ENCODE measurements at regions of chr10 and their contacts with region 1.

Region 1: DNA sequence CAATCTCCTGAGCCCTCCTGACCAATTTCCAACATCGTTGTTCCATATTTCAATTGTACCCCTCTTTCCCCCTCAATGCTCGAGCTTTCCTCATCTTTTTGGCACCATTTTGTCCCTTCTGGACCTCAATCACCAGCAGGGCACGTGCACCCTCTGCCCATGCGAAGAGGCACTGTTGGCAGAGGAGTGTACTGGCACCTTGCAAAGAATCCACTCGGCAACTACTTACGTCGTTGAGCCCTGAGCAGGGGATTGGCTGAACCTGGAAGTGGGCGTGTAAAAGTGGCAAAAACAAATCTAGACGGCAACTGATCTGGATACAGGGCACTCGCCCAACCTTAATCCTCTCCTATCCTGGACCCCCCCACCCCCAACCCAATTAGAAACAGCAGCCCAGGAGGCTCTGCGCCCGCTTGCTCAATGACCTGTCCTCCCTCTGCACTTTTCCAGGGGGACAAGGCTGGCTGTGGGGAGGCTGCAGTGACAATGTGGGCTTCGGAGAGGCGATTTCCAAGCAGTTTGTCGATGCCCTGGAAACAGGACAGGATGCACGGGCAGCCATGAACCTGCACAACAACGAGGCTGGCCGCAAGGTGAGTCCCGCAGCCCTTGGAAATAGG is 18.8 kb downstream of the WNT8B start:
- DNase-seq: peak; percentile 86 to 97 (median 90)
- ATAC-seq: peak; percentile 98
- H3K4me3 ChIP-seq: peak overlapping the region; percentile 70
- H3K4me3 Mint-ChIP-seq: peak overlapping the region; percentile 63 to 92 (median 86)
- H3K27ac ChIP-seq: no peak overlapping the region
- H3K27ac Mint-ChIP-seq: peak overlapping the region in 5 of 9 donors; percentile 1 to 76 (median 66)
- H3K4me1 ChIP-seq: peaks cover 0 to 4% of the 10 kb centered on the region in 2 donors
- H3K4me1 Mint-ChIP-seq: peaks cover 10 to 35% (median 12%) of the 10 kb centered on the region in 7 donors
- H3K27me3 ChIP-seq: no peaks in the 10 kb centered on the region
- H3K27me3 Mint-ChIP-seq: peaks cover 4 to 31% (median 26%) of the 10 kb centered on the region in 5 donors

Region 2: DNA sequence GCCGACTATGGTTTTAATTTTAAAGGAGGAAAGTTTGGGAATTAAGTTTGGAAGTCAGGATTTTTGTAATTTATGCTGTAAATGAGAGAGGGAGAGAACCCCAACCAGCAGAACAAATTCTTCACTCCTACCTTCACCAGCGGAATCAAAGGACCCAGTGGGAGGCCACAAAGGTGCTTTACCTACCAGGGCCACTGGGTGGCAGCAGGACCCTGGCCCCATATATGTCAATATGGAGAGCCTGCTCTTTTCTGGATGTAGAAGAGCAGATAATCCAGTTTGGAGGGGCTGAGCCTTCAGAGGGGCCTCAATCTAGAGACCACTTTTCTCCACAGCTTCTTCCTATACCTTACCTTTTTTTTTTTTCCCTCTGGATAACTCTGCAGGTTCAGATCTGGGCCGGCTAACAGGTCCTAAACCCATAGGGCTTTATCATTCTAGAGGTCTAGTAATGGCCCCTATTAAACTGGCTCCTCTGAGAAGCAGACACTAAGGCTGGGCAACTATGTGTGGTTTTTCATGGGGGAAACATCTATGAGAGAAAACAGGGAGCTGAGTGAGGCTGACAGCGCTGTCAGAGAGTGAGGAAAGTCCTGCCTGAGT is 143.0 kb before region 1 on chr10:
- CTCF ChIA-PET with region 1: interaction called, 11 read pairs
- POLR2A ChIA-PET with region 1: interaction called, 3 read pairs
- intact Hi-C with region 1: no loop called
- DNase-seq: peak; percentile 50 to 82 (median 74)
- ATAC-seq: peak; percentile 94
- H3K4me3 ChIP-seq: no peak overlapping the region
- H3K4me3 Mint-ChIP-seq: no peak overlapping the region
- H3K27ac ChIP-seq: no peak overlapping the region
- H3K27ac Mint-ChIP-seq: peak overlapping the region in 2 of 9 donors; percentile 69 to 82
- H3K4me1 ChIP-seq: no peaks in the 10 kb centered on the region
- H3K4me1 Mint-ChIP-seq: peaks cover 0 to 35% (median 0%) of the 10 kb centered on the region in 7 donors
- H3K27me3 ChIP-seq: no peaks in the 10 kb centered on the region
- H3K27me3 Mint-ChIP-seq: peaks cover 0 to 15% (median 0%) of the 10 kb centered on the region in 5 donors

Region 3: GRCh38 chr10:100346765-100347567 is 134.6 kb before region 1 on chr10 and contains the start of gene SCD:
- CTCF ChIA-PET with region 1: interaction called, 3 read pairs
- POLR2A ChIA-PET with region 1: interaction called, 3 read pairs
- intact Hi-C with region 1: loop called in 1 of 2 experiments (anchors 1 kb)
- DNase-seq: peak; percentile 41 to 86 (median 58)
- ATAC-seq: peak; percentile 93
- H3K4me3 ChIP-seq: peak within 1 kb of the TSS; percentile 67
- H3K4me3 Mint-ChIP-seq: peak within 1 kb of the TSS; percentile 84 to 98 (median 90)
- H3K27ac ChIP-seq: peak within 1 kb of the TSS; percentile 48
- H3K27ac Mint-ChIP-seq: peak within 1 kb of the TSS in 8 of 9 donors; percentile 19 to 87 (median 68)
- H3K4me1 ChIP-seq: peaks cover 5 to 10% of the 10 kb centered on the region in 2 donors
- H3K4me1 Mint-ChIP-seq: peaks cover 15 to 69% (median 27%) of the 10 kb centered on the region in 7 donors
- H3K27me3 ChIP-seq: no peaks in the 10 kb centered on the region
- H3K27me3 Mint-ChIP-seq: peaks cover 0 to 8% (median 0%) of the 10 kb centered on the region in 5 donors
- total RNA-seq, gene SCD: 1.1 to 121 (median 2.3) TPM

Region 4: GRCh38 chr10:100518761-100519241 is 37.2 kb after region 1 on chr10:
- CTCF ChIA-PET with region 1: interaction called, 28 read pairs
- POLR2A ChIA-PET with region 1: interaction called, 3 read pairs
- intact Hi-C with region 1: loop called (anchors 1 kb)
- DNase-seq: peak in 7 of 9 donors; percentile 48 to 65 (median 58)
- ATAC-seq: peak; percentile 83
- H3K4me3 ChIP-seq: no peak overlapping the region
- H3K4me3 Mint-ChIP-seq: peak overlapping the region in 1 of 10 donors; percentile 30
- H3K27ac ChIP-seq: no peak overlapping the region
- H3K27ac Mint-ChIP-seq: peak overlapping the region in 5 of 9 donors; percentile 62 to 83 (median 72)
- H3K4me1 ChIP-seq: peaks cover 0 to 10% of the 10 kb centered on the region in 2 donors
- H3K4me1 Mint-ChIP-seq: peaks cover 4 to 49% (median 16%) of the 10 kb centered on the region in 7 donors
- H3K27me3 ChIP-seq: no peaks in the 10 kb centered on the region
- H3K27me3 Mint-ChIP-seq: no peaks in the 10 kb centered on the region

Measured in naive thymus-derived CD4-positive, alpha-beta T cell (primary cell).